ENCODE measurements at regions of chr5 and their contacts with region 1.

Region 1: DNA sequence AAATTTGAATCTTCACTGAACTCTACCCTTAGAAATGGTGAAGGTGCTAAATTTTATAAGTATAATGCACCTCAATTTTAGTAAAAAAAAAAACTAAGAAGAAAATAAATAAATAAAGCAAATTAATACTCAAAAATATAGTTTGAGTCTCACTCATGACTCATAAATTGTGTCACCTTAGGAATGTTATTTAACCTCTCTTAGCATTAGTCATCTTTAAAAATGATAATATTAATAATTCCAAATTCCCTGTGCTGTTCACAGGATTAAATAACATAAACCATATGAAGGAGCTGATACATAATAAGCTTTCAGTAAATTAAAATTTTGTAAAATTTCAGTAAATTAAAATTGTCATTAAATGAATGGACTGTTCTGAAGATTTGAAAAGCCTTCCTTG is 339.8 kb upstream of the RGMB start:
- DNase-seq: peak; percentile 42
- H3K27ac ChIP-seq: no peak overlapping the region
- CTCF ChIP-seq: no peak

Region 2: DNA sequence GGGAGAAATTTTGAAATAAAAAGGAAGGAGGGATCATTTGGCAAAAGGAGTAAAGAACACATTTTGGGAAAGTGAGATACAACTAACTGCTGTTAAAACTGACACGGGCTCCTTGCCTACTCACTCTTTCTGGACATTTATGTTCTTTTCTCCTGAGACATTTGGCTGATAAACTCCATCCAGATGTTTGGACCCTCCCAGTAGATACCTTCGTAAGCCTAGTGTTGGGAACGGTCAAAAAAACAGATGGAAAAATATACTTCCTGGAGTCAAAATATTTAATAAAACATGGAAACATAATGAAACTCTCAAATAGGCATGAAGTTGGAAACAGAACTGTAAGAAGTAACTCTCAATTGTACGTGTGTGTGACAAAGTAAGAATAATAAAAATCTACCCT is 890.5 kb before region 1 on chr5:
- CTCF ChIA-PET with region 1: interaction called, 11 read pairs
- POLR2A ChIA-PET with region 1: no interaction called
- DNase-seq: no peak
- H3K27ac ChIP-seq: no peak overlapping the region
- CTCF ChIP-seq: no peak

Measured in RWPE1 (cell line).